ENCODE measurements at regions of chr5 and their contacts with region 1.

Region 1: DNA sequence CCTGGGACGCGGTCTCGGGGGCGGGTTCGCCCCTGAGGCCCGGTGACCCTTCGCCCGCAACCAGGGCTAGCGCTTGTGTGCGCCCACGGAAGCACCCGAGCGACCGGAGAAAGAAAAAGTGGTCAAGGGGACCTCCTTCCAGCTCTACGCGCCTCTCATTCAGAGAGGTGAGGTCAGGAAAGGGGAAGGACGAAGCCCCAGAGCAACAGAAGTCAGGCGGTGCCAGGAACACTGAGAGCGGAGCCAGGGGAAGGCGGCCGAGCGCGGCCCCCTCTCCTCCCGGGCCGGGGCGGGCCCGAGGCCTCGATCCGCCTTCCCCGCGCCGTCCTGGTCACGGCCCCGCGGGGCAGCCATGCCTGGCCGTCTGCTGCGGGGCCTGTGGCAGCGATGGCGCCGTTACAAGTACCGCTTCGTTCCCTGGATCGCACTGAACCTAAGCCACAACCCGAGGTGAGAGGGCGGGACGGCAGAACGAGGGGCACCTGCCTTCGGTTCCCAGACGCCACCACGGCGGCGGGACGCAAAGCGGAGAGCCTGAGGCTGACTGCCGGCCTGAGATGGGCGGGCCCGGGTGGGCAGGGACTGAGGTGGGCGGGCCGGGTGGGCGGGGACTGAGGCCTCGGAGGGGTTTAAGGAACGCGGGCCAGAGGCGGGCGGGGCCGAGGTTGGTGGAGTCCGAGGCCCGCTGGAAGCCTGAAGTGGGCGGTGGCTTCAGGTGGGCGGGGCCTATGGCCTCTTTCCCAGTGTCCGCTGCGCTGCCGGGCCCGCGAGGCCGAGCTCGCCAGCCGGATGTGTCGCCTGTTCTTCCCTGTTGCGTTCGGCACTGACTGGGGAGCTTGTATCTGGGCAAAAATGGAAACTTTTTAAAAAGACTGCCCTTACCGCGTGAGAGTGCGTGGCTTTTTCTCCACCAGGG is at the start of gene SETD9:
- DNase-seq: peak; percentile 67 to 94 (median 73)
- ATAC-seq: peak; percentile 90
- H3K4me3 ChIP-seq: peak within 1 kb of the TSS; percentile 75
- H3K4me3 Mint-ChIP-seq: peak within 1 kb of the TSS; percentile 88 to 100 (median 91)
- H3K27ac ChIP-seq: peak within 1 kb of the TSS; percentile 79
- H3K27ac Mint-ChIP-seq: peak within 1 kb of the TSS; percentile 81 to 97 (median 89)
- H3K4me1 ChIP-seq: no peaks in the 10 kb centered on the region
- H3K4me1 Mint-ChIP-seq: peaks cover 12 to 24% (median 21%) of the 10 kb centered on the region in 7 donors
- H3K27me3 ChIP-seq: no peaks in the 10 kb centered on the region
- H3K27me3 Mint-ChIP-seq: peaks cover 0 to 15% (median 0%) of the 10 kb centered on the region in 5 donors
- total RNA-seq, gene SETD9: 3.7 to 9.7 (median 6.6) TPM

Region 2: DNA sequence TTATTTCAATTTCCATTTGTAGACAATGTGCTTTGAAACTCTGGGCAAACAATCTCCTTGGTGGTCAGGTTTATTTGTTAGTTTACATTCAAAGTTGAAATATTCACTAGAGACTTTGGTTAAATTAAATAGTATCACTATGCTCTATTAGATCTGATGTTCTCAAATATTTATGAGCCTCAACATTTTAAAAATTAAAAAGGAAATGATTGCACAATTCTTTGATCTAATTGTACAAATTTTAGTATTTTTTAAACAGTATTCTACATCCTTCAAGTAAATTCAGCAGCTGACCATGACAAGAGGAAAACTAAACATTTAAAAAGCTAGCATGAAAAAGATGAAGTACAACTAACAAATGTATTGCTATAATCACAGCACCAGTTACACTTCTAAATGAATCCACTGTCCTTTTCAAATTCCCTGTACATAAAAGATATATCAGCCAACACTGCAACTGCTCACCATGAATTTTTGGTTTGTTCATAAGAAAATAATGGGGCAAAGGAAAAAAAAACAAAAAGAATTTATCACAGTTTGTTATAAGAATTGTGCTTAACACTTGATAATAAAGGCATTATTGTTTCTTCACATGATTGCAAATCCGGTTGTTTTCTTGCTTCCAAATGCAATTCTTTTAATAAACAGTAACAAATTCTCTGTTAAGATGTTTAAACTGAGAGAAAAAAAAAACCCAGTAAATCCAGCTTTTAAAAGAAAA is 10.6 kb after region 1 on chr5:
- CTCF ChIA-PET with region 1: interaction called, 3 read pairs
- POLR2A ChIA-PET with region 1: interaction called, 4 read pairs
- intact Hi-C with region 1: loop called in 1 of 2 experiments (anchors 1 kb)
- DNase-seq: no peak
- ATAC-seq: no peak
- H3K4me3 ChIP-seq: no peak overlapping the region
- H3K4me3 Mint-ChIP-seq: no peak overlapping the region
- H3K27ac ChIP-seq: no peak overlapping the region
- H3K27ac Mint-ChIP-seq: no peak overlapping the region
- H3K4me1 ChIP-seq: no peaks in the 10 kb centered on the region
- H3K4me1 Mint-ChIP-seq: peaks cover 0 to 12% (median 4%) of the 10 kb centered on the region in 7 donors
- H3K27me3 ChIP-seq: no peaks in the 10 kb centered on the region
- H3K27me3 Mint-ChIP-seq: no peaks in the 10 kb centered on the region

Region 3: DNA sequence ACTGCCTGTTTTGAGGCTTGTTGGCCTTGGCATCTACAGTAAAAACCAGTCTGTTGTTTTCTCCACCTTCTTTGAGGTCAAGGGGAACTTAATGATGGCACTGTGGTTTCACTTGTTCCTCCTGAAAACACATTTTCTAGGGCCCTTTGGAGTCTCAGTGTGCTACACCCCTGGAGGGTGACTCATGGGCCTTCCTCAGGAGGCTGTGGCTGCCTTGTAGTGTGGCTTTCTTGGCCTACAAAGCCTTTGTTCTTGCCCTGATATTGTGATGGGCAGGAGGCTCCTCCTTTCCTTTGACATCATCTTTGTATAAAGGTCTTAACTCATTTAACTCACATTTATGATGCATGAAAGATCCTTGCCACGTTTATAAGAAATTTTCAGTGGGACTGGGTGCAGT is 208.0 kb after region 1 on chr5:
- CTCF ChIA-PET with region 1: no interaction called
- POLR2A ChIA-PET with region 1: no interaction called
- intact Hi-C with region 1: loop called in 1 of 2 experiments (anchors 5 kb)
- DNase-seq: peak in 7 of 9 donors; percentile 5 to 66 (median 25)
- ATAC-seq: peak; percentile 91
- H3K4me3 ChIP-seq: no peak overlapping the region
- H3K4me3 Mint-ChIP-seq: peak overlapping the region in 2 of 10 donors; percentile 7 to 65
- H3K27ac ChIP-seq: no peak overlapping the region
- H3K27ac Mint-ChIP-seq: peak overlapping the region in 6 of 9 donors; percentile 38 to 88 (median 56)
- H3K4me1 ChIP-seq: no peaks in the 10 kb centered on the region
- H3K4me1 Mint-ChIP-seq: peaks cover 0 to 27% (median 0%) of the 10 kb centered on the region in 7 donors
- H3K27me3 ChIP-seq: no peaks in the 10 kb centered on the region
- H3K27me3 Mint-ChIP-seq: peaks cover 0 to 3% (median 0%) of the 10 kb centered on the region in 5 donors

Region 4: DNA sequence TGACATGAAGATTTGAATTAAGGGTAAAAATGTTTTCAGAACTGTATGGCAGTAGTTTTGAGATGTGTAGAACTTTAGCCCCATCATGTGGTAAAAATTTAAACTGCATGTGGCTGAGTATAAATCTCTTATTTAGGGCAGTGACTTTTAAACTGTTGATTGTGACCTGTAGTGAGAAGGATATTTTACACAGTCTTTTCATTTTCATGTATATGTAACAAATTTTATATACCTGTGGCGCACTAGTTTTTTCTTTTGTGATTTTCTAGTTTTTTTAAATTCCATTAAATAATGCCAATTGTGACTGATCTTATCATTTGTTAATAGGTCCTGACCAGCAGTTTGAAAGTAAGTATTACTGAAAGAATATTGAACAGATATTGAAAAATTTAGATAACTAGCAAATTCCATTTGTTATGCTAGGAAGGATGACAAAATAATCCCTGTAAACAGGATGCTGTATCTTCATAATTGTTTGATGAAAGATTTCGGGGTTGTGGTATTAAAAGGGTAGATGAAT is 311.6 kb after region 1 on chr5:
- CTCF ChIA-PET with region 1: no interaction called
- POLR2A ChIA-PET with region 1: no interaction called
- intact Hi-C with region 1: loop called in 1 of 2 experiments (anchors 2 kb)
- DNase-seq: peak in 7 of 9 donors; percentile 41 to 79 (median 73)
- ATAC-seq: peak; percentile 86
- H3K4me3 ChIP-seq: no peak overlapping the region
- H3K4me3 Mint-ChIP-seq: peak overlapping the region in 1 of 10 donors; percentile 30
- H3K27ac ChIP-seq: no peak overlapping the region
- H3K27ac Mint-ChIP-seq: peak overlapping the region in 8 of 9 donors; percentile 19 to 87 (median 76)
- H3K4me1 ChIP-seq: peaks cover 4 to 7% of the 10 kb centered on the region in 2 donors
- H3K4me1 Mint-ChIP-seq: peaks cover 3 to 62% (median 41%) of the 10 kb centered on the region in 7 donors
- H3K27me3 ChIP-seq: no peaks in the 10 kb centered on the region
- H3K27me3 Mint-ChIP-seq: no peaks in the 10 kb centered on the region

Region 5: GRCh38 chr5:57316798-57317327 is 407.3 kb after region 1 on chr5:
- CTCF ChIA-PET with region 1: no interaction called
- POLR2A ChIA-PET with region 1: no interaction called
- intact Hi-C with region 1: no loop called
- DNase-seq: no peak
- ATAC-seq: peak; percentile 40
- H3K4me3 ChIP-seq: no peak overlapping the region
- H3K4me3 Mint-ChIP-seq: no peak overlapping the region
- H3K27ac ChIP-seq: no peak overlapping the region
- H3K27ac Mint-ChIP-seq: no peak overlapping the region
- H3K4me1 ChIP-seq: no peaks in the 10 kb centered on the region
- H3K4me1 Mint-ChIP-seq: peaks cover 0 to 3% (median 0%) of the 10 kb centered on the region in 7 donors
- H3K27me3 ChIP-seq: no peaks in the 10 kb centered on the region
- H3K27me3 Mint-ChIP-seq: peaks cover 0 to 9% (median 0%) of the 10 kb centered on the region in 5 donors

Measured in naive thymus-derived CD4-positive, alpha-beta T cell (primary cell).